H1 (cell line): ENCODE measurements at regions of chr11 and their contacts with region 1.

Region 1: DNA sequence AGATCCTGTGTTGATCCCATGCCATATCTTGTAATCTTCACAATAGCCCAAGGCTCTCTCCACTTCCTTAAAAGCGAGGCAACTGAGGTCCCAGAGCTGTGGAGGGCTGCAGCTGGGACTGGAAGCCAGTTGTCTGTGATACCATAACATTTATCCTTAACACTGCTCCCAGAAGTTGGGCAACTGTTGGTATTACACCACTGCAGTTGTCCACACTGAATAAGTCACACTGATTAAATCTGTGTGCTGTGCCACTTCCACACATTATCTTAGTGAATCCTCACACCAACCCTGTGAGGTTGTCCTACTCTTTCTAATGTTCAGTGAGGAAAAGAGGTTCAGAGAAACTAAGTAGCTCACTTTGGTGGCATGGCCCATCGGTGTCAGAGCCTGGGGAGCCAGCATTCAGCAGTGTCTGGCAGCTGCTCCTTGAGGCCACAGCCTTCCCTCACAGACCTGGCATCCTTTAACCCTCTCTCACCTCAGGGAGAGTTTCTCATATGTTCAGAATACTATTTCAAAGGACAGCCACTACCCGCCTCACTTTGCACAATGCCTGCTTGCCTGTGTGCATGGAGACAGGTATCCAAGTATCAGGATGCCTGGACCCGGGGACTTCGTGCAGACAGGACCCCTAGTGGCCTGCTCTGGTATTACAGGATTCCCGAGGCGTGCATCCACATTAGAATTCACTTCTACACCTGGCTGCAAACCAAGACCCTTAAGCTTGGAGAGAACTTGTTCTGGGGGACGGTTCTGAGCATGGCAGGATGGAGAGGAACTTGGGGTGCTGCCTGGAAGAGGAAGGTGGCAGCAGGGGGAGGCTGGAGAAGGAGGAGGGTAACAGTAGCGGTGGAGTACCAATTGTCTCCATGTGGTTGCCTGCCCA is 221.9 kb upstream of the TBCEL start:
- DNase-seq: peak; percentile 25 to 91
- H3K4me3 ChIP-seq: no peak overlapping the region
- H3K27ac ChIP-seq: no peak overlapping the region
- H3K4me1 ChIP-seq: peaks cover 0 to 3% (median 1%) of the 10 kb centered on the region in 4 experiments; a peak in 4 of 7 replicates
- H3K27me3 ChIP-seq: no peaks in the 10 kb centered on the region
- CTCF ChIP-seq: peak; percentile 85 to 95 (median 86)
- EP300 ChIP-seq: no peak
- POLR2A ChIP-seq: no peak
- RAD21 ChIP-seq: peak; percentile 80 to 90

Region 2: DNA sequence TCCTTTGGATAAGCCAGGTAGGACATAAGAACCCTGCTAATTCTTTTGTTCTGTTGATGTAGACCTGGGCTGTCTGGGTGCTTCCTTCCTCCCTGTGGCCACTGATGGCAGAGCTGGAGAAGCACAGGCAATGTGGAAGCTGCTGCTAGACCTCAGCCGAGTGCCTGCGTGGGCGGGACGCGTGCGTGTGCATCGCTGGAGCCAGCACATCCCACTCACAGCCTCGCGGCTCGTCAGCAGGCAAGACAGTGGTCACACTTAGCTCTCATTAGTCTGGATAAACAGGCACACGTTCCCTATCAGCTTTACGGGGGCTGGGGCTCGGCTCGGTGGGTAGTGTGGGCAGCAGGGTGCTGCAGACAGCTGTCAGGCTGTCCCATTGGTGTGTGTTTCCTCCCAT is 134.8 kb before region 1 on chr11:
- CTCF ChIA-PET with region 1: interaction called, 27 read pairs
- POLR2A ChIA-PET with region 1: no interaction called
- DNase-seq: no peak
- H3K4me3 ChIP-seq: no peak overlapping the region
- H3K27ac ChIP-seq: no peak overlapping the region
- H3K4me1 ChIP-seq: peaks cover 3 to 7% (median 5%) of the 10 kb centered on the region in 4 experiments; a peak in 5 of 7 replicates
- H3K27me3 ChIP-seq: no peaks in the 10 kb centered on the region
- CTCF ChIP-seq: no peak
- EP300 ChIP-seq: no peak
- POLR2A ChIP-seq: no peak
- RAD21 ChIP-seq: no peak

Region 3: GRCh38 chr11:120710354-120711131 is 91.5 kb before region 1 on chr11:
- CTCF ChIA-PET with region 1: interaction called, 36 read pairs
- POLR2A ChIA-PET with region 1: no interaction called
- DNase-seq: peak; percentile 55 to 56
- H3K4me3 ChIP-seq: no peak overlapping the region; a peak in 1 of 8 replicates
- H3K27ac ChIP-seq: no peak overlapping the region
- H3K4me1 ChIP-seq: peaks cover 0 to 8% (median 4%) of the 10 kb centered on the region in 4 experiments; a peak in 3 of 7 replicates
- H3K27me3 ChIP-seq: no peaks in the 10 kb centered on the region; a peak in 2 of 7 replicates
- CTCF ChIP-seq: no peak
- EP300 ChIP-seq: no peak
- POLR2A ChIP-seq: no peak
- RAD21 ChIP-seq: no peak

Region 4: GRCh38 chr11:120773501-120774031 is 28.5 kb before region 1 on chr11:
- CTCF ChIA-PET with region 1: interaction called, 12 read pairs
- POLR2A ChIA-PET with region 1: no interaction called
- DNase-seq: no peak
- H3K4me3 ChIP-seq: no peak overlapping the region
- H3K27ac ChIP-seq: no peak overlapping the region
- H3K4me1 ChIP-seq: peaks cover 5 to 21% (median 12%) of the 10 kb centered on the region in 4 experiments
- H3K27me3 ChIP-seq: no peaks in the 10 kb centered on the region
- CTCF ChIP-seq: no peak
- EP300 ChIP-seq: no peak
- POLR2A ChIP-seq: no peak
- RAD21 ChIP-seq: no peak

Region 5: DNA sequence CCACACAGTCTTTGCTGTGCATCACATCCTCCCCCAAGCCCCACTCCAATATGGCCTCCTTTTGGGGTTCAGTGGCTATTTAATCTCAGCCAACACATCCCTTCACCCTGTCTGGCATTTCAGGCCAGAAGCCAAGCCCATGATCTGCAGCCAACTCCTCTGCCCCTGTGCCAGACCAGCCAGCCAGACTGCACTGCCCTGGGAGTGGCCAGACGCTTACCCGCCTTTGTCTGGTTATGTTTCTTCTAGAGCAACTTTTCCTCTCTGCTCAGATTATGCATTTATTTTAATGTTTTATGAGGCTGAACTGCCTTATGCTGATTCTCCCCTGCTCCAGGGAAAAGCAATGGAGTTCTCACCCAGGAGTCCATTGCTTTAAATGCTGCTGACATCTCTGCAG is 15.1 kb after region 1 on chr11:
- CTCF ChIA-PET with region 1: interaction called, 26 read pairs
- POLR2A ChIA-PET with region 1: no interaction called
- DNase-seq: no peak
- H3K4me3 ChIP-seq: no peak overlapping the region
- H3K27ac ChIP-seq: no peak overlapping the region
- H3K4me1 ChIP-seq: no peaks in the 10 kb centered on the region
- H3K27me3 ChIP-seq: no peaks in the 10 kb centered on the region
- CTCF ChIP-seq: no peak
- EP300 ChIP-seq: no peak
- POLR2A ChIP-seq: no peak
- RAD21 ChIP-seq: no peak

Region 6: GRCh38 chr11:120839846-120840402 is 37.9 kb after region 1 on chr11:
- CTCF ChIA-PET with region 1: interaction called, 10 read pairs
- POLR2A ChIA-PET with region 1: no interaction called
- DNase-seq: no peak
- H3K4me3 ChIP-seq: no peak overlapping the region
- H3K27ac ChIP-seq: no peak overlapping the region
- H3K4me1 ChIP-seq: no peaks in the 10 kb centered on the region
- H3K27me3 ChIP-seq: no peaks in the 10 kb centered on the region
- CTCF ChIP-seq: no peak
- EP300 ChIP-seq: no peak
- POLR2A ChIP-seq: no peak
- RAD21 ChIP-seq: no peak